ENCODE measurements at regions of chr19 and their contacts with region 1.

Region 1: GRCh38 chr19:42132851-42133528 is 744 bp upstream of the POU2F2 start:
- DNase-seq: peak; percentile 61
- H3K4me3 ChIP-seq: peak overlapping the region; percentile 51
- H3K27ac ChIP-seq: no peak overlapping the region
- H3K4me1 ChIP-seq: peaks cover 15% of the 10 kb centered on the region
- H3K27me3 ChIP-seq: peaks cover 99% of the 10 kb centered on the region
- CTCF ChIP-seq: peak; percentile 98

Region 2: GRCh38 chr19:42038666-42039065 is 94.3 kb before region 1 on chr19:
- intact Hi-C with region 1: no loop called
- DNase-seq: peak; percentile 73
- H3K4me3 ChIP-seq: no peak overlapping the region
- H3K27ac ChIP-seq: peak overlapping the region; percentile 93
- H3K4me1 ChIP-seq: peaks cover 42% of the 10 kb centered on the region
- H3K27me3 ChIP-seq: no peaks in the 10 kb centered on the region
- CTCF ChIP-seq: no peak

Region 3: GRCh38 chr19:42184401-42184861 is 51.4 kb after region 1 on chr19:
- intact Hi-C with region 1: loop called (anchors 10 kb)
- DNase-seq: peak; percentile 70
- H3K4me3 ChIP-seq: no peak overlapping the region
- H3K27ac ChIP-seq: no peak overlapping the region
- H3K4me1 ChIP-seq: no peaks in the 10 kb centered on the region
- H3K27me3 ChIP-seq: peaks cover 42% of the 10 kb centered on the region
- CTCF ChIP-seq: peak; percentile 89

Measured in left ventricle myocardium inferior (tissue), 1 donor.